K562 (cell line): ENCODE measurements at regions of chr21 and their contacts with region 1.

Region 1: DNA sequence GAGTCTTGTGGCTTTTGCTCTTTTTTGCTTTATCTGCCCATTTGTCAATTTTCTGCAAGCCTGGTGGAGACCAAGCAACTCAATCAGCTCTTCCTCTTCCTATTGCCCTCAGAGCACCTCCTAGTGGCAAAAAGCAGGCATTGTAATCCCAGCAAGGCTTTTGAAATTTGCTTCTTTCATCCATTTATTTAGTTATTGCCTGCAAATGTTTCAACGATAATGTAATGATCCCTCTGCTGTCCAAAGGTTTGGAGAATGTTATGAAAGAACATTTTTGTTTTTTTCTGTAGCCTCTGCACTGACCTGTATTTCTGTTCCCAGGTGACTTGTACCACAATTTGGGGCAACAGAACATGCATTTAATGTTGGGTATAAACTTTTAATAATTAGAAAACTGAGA is 127.8 kb downstream of the GABPA start:
- DNase-seq: peak; percentile 40 to 55 (median 48)
- ATAC-seq: peak; percentile 78
- H3K4me3 ChIP-seq: no peak overlapping the region
- H3K27ac ChIP-seq: no peak overlapping the region
- H3K4me1 ChIP-seq: no peaks in the 10 kb centered on the region
- H3K27me3 ChIP-seq: no peaks in the 10 kb centered on the region; a peak in 1 of 5 replicates
- CTCF ChIP-seq: peak; percentile 74 to 86 (median 83)
- EP300 ChIP-seq: no peak
- POLR2A ChIP-seq: no peak
- RAD21 ChIP-seq: peak; percentile 59 to 78

Region 2: DNA sequence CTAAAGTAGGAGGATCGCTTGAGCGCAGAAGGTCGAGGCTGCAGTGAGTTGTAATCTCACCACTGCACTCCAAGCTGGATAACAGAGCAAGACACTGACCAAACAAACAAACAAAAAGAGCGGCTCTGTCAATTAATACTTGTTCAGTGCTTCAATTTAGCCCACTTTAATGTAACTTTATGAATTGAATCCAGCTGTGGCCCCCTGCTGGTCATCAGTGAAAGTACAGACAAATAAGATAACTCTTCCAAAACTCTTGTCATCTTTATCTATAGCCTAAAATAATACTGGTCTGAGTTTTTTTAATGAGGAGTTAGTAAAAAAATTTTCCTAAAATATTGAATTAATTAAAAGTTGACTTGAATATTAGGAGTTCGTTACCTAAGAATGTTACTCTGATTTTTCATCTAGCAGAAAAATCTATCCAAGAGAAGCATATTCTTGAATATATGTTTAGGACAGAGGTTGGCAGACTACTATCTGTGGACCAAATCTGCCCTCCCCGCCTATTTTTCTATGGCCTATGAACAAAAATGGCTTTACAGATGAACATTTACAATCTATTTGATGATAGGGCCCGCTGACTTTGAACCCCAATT is 154.0 kb before region 1 on chr21:
- CTCF ChIA-PET with region 1: no interaction called
- POLR2A ChIA-PET with region 1: no interaction called
- in situ Hi-C with region 1: no loop called
- intact Hi-C with region 1: loop called (anchors 10 kb)
- DNase-seq: peak; percentile 49 to 60 (median 57)
- ATAC-seq: no peak
- H3K4me3 ChIP-seq: no peak overlapping the region
- H3K27ac ChIP-seq: no peak overlapping the region
- H3K4me1 ChIP-seq: no peaks in the 10 kb centered on the region; a peak in 1 of 5 replicates
- H3K27me3 ChIP-seq: no peaks in the 10 kb centered on the region
- CTCF ChIP-seq: peak; percentile 37 to 77 (median 73); a peak in 4 of 6 replicates
- EP300 ChIP-seq: no peak
- POLR2A ChIP-seq: no peak
- RAD21 ChIP-seq: peak; percentile 15 to 58; a peak in 2 of 4 replicates

Region 3: DNA sequence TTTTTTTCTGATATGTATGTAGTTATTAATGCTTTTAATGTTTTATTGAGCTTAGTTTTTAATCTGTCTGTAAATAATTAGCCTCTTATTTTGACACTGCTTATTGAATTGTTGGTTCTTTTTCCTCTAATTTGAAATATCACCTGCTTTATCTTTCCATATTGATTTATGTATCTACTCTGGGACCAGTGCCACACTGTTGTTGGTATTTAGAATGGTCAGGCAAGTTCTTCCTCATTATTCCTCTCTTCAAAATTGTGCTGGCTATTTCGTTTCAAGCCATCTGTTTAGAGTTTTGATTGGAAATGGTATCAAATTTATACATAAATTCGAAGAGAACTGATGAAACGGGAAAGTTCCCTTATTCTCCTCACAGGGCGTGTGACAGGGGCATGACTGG is 404.8 kb after region 1 on chr21:
- CTCF ChIA-PET with region 1: no interaction called
- POLR2A ChIA-PET with region 1: no interaction called
- in situ Hi-C with region 1: no loop called
- intact Hi-C with region 1: no loop called
- DNase-seq: no peak
- ATAC-seq: no peak
- H3K4me3 ChIP-seq: no peak overlapping the region
- H3K27ac ChIP-seq: no peak overlapping the region
- H3K4me1 ChIP-seq: no peaks in the 10 kb centered on the region
- H3K27me3 ChIP-seq: no peaks in the 10 kb centered on the region
- CTCF ChIP-seq: no peak
- EP300 ChIP-seq: no peak
- POLR2A ChIP-seq: no peak
- RAD21 ChIP-seq: no peak

Region 4: GRCh38 chr21:26546446-26547097 is 684.0 kb after region 1 on chr21:
- CTCF ChIA-PET with region 1: no interaction called
- POLR2A ChIA-PET with region 1: no interaction called
- in situ Hi-C with region 1: no loop called
- intact Hi-C with region 1: no loop called
- DNase-seq: no peak
- ATAC-seq: no peak
- H3K4me3 ChIP-seq: no peak overlapping the region
- H3K27ac ChIP-seq: no peak overlapping the region
- H3K4me1 ChIP-seq: no peaks in the 10 kb centered on the region
- H3K27me3 ChIP-seq: no peaks in the 10 kb centered on the region
- CTCF ChIP-seq: no peak
- EP300 ChIP-seq: no peak
- POLR2A ChIP-seq: no peak
- RAD21 ChIP-seq: no peak